ENCODE measurements at regions of chr9 and their contacts with region 1.

Region 1: GRCh38 chr9:36258208-36258988 is at the start of gene GNE:
- DNase-seq: peak; percentile 98
- H3K4me3 Mint-ChIP-seq: peak within 1 kb of the TSS; percentile 98
- H3K27ac Mint-ChIP-seq: peak within 1 kb of the TSS; percentile 87
- H3K4me1 Mint-ChIP-seq: peaks cover 22% of the 10 kb centered on the region
- H3K27me3 Mint-ChIP-seq: no peaks in the 10 kb centered on the region
- total RNA-seq, gene GNE: 22.0 to 23.0 TPM

Region 2: GRCh38 chr9:36328798-36329411 is 70.5 kb after region 1 on chr9:
- CTCF ChIA-PET with region 1: interaction called, 13 read pairs
- POLR2A ChIA-PET with region 1: interaction called, 9 read pairs
- DNase-seq: peak; percentile 38
- H3K4me3 Mint-ChIP-seq: no peak overlapping the region
- H3K27ac Mint-ChIP-seq: no peak overlapping the region
- H3K4me1 Mint-ChIP-seq: peaks cover 6% of the 10 kb centered on the region
- H3K27me3 Mint-ChIP-seq: no peaks in the 10 kb centered on the region

Region 3: DNA sequence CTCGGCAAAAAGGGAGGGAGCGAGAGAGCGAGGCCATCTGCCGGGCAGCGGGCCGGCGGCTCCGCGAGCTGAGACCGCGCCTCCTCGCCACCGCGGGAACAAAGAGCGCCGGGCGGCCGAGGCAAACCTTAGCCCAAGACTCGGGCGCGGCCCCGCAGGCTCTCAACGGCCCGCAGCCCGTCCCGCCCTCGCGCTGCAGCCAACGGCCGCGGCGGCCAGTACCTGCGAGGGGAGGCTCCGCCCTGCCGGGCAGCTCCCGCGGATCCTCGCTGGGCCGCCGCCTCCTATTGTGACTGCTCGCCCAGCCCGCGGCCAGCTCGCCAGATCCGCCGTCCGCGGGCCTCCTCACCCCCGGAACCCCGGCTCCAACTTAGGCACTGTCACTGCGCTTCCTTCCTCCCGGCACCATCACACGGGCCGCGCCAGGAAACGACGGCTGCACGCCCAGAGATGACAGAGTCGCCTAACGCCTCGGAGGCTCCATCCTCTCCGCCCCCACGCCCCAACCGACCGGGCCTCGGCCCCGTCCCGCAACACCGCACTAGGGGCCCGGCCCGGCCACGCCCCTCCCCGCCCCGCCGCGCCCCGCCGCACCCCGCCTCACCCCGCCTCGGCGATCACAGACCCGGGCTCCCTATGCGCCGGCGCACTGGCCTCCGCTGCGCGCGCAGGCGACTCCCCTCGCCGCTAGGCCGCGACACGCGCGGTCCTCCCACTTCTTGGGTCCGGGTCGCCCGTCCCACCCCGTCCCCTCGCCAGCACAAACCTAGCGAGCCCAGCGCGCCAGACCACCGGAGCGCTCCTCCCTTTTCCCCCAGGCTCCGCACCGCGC is 142.2 kb after region 1 on chr9:
- CTCF ChIA-PET with region 1: no interaction called
- POLR2A ChIA-PET with region 1: interaction called, 11 read pairs
- DNase-seq: peak; percentile 92
- H3K4me3 Mint-ChIP-seq: peak overlapping the region; percentile 88
- H3K27ac Mint-ChIP-seq: peak overlapping the region; percentile 97
- H3K4me1 Mint-ChIP-seq: peaks cover 40% of the 10 kb centered on the region
- H3K27me3 Mint-ChIP-seq: no peaks in the 10 kb centered on the region